AG04449 (cell line): ENCODE measurements at regions of chr15 and their contacts with region 1.

Region 1: GRCh38 chr15:89177633-89178306 is 43.6 kb downstream of the RLBP1 start:
- DNase-seq: peak; percentile 37
- H3K4me3 ChIP-seq: no peak overlapping the region
- CTCF ChIP-seq: peak; percentile 80

Region 2: GRCh38 chr15:88878720-88879184 is 299.0 kb before region 1 on chr15:
- CTCF ChIA-PET with region 1: interaction called, 20 read pairs
- POLR2A ChIA-PET with region 1: no interaction called
- DNase-seq: no peak
- H3K4me3 ChIP-seq: no peak overlapping the region
- CTCF ChIP-seq: peak; percentile 90

Region 3: GRCh38 chr15:89017370-89018066 is 160.3 kb before region 1 on chr15:
- CTCF ChIA-PET with region 1: interaction called, 18 read pairs
- POLR2A ChIA-PET with region 1: interaction called, 3 read pairs
- DNase-seq: peak; percentile 69
- H3K4me3 ChIP-seq: peak overlapping the region; percentile 45
- CTCF ChIP-seq: peak; percentile 82

Region 4: DNA sequence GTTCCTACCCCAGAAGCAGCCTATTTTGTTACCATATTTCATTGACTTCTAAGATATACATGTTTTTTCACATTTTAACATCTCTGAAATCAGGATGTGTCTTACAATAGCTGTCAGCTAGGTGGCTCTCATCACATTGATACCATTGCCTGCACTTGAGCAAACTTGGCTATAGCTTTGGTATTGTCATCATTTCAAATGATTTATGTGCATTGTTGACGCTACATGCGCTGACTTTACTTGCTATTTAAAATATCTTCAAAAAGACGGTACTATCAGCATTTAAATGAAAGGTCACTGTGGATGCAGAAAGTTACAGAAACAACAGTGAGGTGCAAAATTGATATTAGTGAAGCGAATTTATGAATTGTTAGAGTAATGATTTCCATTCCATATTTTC is 143.5 kb before region 1 on chr15:
- CTCF ChIA-PET with region 1: interaction called, 30 read pairs
- POLR2A ChIA-PET with region 1: no interaction called
- DNase-seq: no peak
- H3K4me3 ChIP-seq: no peak overlapping the region
- CTCF ChIP-seq: peak; percentile 43

Region 5: GRCh38 chr15:89112341-89112971 is 65.3 kb before region 1 on chr15:
- CTCF ChIA-PET with region 1: interaction called, 10 read pairs
- POLR2A ChIA-PET with region 1: no interaction called
- DNase-seq: no peak
- H3K4me3 ChIP-seq: no peak overlapping the region
- CTCF ChIP-seq: no peak

Region 6: GRCh38 chr15:89150762-89151664 is 26.8 kb before region 1 on chr15:
- CTCF ChIA-PET with region 1: interaction called, 38 read pairs
- POLR2A ChIA-PET with region 1: no interaction called
- DNase-seq: no peak
- H3K4me3 ChIP-seq: no peak overlapping the region
- CTCF ChIP-seq: no peak

Region 7: GRCh38 chr15:89187976-89188514 is 10.3 kb after region 1 on chr15:
- CTCF ChIA-PET with region 1: interaction called, 37 read pairs
- POLR2A ChIA-PET with region 1: no interaction called
- DNase-seq: no peak
- H3K4me3 ChIP-seq: no peak overlapping the region
- CTCF ChIP-seq: no peak

Region 8: DNA sequence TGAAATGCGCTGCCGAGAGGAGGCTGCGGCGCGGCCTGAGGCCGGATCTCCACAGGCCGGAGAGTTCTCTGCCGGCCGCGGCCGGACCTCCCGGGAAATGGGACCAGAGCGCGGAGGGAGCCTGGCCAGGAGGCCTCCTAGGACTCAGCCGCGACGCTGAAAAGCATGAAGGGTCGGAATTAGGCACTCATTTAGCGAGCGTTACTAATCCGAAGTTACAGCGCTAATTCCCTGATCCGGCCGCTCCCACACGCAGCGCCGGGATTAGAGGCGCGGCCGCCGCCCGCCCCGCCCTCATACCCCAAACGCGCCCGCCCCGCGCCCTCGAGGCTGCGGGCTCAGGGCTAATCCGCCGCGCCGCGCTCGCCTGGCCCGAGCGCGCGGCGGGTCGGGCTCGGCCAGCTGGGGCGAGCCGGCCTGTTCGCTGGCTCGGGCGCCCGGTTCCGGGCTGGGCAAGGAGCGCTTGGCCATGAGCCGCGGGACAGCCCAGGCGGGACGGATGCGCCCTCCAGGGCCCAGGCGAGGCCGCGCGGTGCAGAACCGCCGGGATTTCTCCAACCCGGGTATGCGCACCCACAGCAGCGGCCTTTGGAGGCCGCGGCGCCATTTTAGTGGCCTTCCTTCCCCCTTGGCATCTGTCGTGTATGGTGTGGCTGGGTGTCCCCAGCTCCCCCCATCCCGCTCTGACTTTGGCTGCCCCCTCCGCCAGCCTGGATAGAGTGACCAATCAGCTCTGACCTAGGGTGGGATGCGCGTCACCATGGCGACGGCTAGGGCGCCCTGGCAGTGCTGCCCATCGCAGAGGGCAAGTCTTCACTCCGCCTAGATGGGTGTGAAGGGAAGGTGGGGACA is 193.7 kb after region 1 on chr15:
- CTCF ChIA-PET with region 1: no interaction called
- POLR2A ChIA-PET with region 1: no interaction called
- DNase-seq: no peak
- H3K4me3 ChIP-seq: no peak overlapping the region
- CTCF ChIP-seq: no peak